GM13977 (cell line): ENCODE measurements at regions of chr14 and their contacts with region 1.

Region 1: GRCh38 chr14:75738192-75738591 is 77.1 kb downstream of the TTLL5 start:
- DNase-seq: no peak
- CTCF ChIP-seq: no peak

Region 2: DNA sequence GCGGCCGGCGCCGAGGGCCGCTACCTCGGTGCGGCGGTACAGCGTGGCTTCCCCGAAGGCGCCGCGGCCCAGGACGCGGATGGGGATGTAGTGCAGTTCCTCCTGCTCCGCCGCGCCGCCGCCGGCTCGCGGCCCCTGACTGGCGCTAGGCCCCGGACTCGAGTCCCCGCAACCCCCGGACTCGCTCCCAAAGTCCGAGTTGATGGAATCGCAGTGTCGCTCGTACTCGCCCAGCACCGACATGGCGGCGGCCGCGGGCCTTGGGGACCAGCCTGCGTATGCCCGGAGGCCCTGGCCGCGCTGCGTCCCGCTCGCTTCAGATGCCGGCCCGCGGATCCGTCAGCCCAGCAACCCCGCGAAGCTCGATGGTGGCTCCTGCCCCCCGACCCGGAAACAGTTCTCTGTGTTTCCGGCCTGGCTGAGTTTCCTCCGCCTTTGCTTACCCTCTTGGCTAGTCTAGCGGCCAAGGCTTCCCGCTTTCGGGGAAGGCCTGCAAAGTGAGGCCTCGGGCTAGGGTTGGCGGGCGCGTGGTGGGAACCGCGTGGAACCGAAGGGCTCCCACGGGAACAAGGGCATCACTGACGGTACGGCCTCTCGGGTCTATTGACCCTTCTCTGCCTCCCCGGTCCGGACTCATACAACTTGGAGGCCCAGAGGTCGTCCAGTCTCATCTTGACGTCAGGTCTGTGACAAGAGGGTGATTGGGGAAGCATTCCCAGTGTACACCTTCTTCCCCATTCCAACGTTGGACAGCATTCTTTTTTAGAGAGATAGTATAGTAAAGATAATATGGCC is 611.3 kb before region 1 on chr14 and contains the start of gene NEK9:
- in situ Hi-C with region 1: no loop called
- DNase-seq: peak; percentile 92
- CTCF ChIP-seq: no peak

Region 3: GRCh38 chr14:75794615-75795038 is 56.4 kb after region 1 on chr14:
- in situ Hi-C with region 1: loop called (anchors 10 kb)
- DNase-seq: no peak
- CTCF ChIP-seq: peak; percentile 32